ENCODE measurements at regions of chr1 and their contacts with region 1.

Region 1: DNA sequence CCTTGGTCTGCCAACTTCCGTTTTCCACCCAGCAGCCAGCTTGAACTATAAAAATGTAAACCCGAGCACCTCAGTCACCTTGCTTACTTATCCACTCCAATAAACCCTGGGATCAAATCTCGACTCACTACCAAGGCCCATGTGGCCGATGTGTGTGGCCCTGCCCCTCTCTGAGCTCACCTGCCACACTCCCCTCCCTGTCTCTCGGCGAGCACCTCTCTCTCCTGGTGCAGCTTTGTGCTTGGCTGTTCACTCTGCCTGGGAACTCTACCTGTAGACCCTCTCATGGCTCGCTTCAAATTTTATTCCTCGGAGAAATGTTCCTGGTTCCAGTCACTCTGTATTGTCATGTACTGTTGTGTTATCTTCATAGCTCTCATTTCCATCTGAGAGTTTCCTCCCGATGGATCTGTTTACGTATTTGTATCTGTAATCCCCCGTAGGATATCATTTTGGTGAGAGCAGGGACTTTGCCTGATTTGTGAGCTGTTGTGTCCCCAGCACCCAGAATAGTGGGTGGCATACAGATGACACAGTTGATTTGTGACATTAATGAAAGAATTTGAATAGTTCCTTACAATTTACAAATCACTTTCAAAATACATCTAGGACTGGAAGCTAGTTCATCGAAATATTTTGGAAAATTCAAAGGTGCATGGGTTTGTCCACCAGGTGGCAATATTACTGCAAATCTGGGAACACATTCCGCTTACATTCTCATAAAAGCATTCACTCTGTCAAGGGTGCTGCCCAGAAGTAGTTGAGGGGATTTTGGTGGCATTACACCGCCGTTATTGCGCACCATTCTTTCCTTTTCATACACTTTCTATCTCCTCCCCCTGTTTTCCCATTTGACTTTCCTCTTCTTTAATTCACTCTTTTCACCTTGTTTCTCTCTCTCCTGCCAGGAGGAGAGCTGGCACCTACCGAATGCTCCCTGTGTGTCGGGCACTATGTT is 95.3 kb downstream of the ABCA4 start:
- DNase-seq: peak; percentile 58
- H3K4me3 ChIP-seq: no peak overlapping the region
- H3K27ac ChIP-seq: no peak overlapping the region
- H3K4me1 ChIP-seq: no peaks in the 10 kb centered on the region
- H3K27me3 ChIP-seq: no peaks in the 10 kb centered on the region
- CTCF ChIP-seq: peak; percentile 71 to 90 (median 88)
- POLR2A ChIP-seq: no peak

Region 2: DNA sequence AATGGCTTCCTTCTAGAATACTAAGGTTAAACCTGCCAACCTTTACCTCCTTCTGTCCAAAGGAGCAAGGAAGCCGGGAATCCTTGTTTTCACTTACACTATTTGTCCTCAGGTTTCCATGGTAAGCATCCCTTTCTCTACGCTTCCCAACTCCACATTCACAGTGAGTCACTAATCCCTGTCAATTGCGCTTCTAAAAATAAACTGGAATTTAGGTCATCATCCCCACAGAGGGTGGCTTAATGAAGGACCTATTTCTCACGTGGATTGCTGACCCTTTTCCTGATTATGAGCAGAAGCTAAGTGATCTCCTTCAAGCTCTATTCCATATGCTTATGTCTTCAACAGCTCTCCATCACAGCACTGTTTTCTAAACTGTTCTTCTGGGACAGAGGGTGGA is 135.1 kb after region 1 on chr1:
- intact Hi-C with region 1: no loop called
- DNase-seq: no peak
- H3K4me3 ChIP-seq: no peak overlapping the region
- H3K27ac ChIP-seq: no peak overlapping the region
- H3K4me1 ChIP-seq: no peaks in the 10 kb centered on the region
- H3K27me3 ChIP-seq: no peaks in the 10 kb centered on the region
- CTCF ChIP-seq: no peak
- POLR2A ChIP-seq: no peak

Region 3: GRCh38 chr1:94335950-94336349 is 310.3 kb after region 1 on chr1:
- intact Hi-C with region 1: loop called (anchors 1 kb)
- DNase-seq: peak; percentile 88
- H3K4me3 ChIP-seq: no peak overlapping the region
- H3K27ac ChIP-seq: no peak overlapping the region
- H3K4me1 ChIP-seq: no peaks in the 10 kb centered on the region
- H3K27me3 ChIP-seq: no peaks in the 10 kb centered on the region
- CTCF ChIP-seq: peak; percentile 68 to 98 (median 92)
- POLR2A ChIP-seq: no peak

Region 4: DNA sequence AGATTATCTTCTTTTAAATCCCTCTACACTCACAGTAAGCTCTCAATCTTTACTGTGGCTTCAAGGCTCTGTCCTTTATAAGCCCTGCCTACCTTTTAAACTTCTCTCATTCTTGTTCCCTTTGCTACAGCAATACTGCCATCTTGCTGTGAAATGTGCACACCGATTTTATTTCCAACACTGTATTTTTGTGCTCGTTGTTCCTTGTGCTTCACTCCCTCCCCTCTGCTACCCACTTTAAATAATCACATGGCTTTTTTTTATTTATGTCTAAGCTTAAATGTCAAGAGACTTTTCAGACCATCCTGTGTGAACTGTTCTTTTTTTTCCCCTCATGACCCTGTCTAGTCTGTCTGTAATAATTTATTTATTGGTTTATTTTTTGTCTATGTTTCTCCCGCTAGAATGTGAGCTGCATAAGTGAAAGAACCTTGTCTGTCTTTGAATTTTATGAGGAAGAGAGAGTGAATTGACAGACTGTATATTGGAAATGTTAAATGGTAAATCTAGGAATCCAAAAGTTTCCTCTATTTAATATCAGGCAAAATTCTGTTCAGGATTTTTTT is 438.2 kb after region 1 on chr1:
- intact Hi-C with region 1: loop called (anchors 10 kb)
- DNase-seq: peak; percentile 27
- H3K4me3 ChIP-seq: no peak overlapping the region
- H3K27ac ChIP-seq: no peak overlapping the region
- H3K4me1 ChIP-seq: no peaks in the 10 kb centered on the region
- H3K27me3 ChIP-seq: no peaks in the 10 kb centered on the region
- CTCF ChIP-seq: peak in 3 of 4 experiments; percentile 48 to 65 (median 63)
- POLR2A ChIP-seq: no peak